ENCODE measurements at regions of chr14 and their contacts with region 1.

Region 1: DNA sequence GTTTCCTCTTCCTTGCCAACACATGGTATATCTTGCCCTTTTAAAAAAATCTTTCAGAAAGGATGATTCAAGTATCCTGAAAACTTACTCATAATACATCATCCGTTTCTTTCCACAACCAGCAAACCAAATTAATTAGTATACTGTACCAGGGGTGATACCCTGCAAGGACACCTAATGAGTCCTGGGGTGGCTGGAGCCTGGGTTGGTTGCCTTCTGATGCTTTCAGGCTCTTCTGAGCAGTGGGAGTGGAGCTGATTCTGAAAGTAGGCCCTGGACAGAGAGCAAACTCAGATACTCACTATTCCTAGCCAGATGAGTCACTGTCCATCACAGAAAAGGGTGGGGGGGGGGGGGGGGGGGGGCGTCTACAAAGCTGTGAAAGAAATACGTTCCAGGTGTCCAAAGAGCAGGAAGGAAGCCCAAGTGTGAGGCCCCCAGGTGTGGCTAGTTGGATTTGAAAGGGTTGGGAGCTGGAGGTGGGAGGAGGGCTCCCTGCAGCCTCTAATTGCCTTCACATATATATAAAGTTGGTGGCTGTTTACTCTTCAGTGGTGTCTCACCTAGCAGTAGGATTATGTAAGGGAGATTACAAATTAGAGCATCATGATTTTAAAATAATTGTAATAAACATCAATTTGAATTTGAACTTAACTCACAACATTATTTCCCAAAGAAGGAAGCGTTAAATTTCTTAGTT is 36.5 kb downstream of the FBXO33 start:
- DNase-seq: peak; percentile 26
- H3K4me3 Mint-ChIP-seq: no peak overlapping the region
- H3K27ac Mint-ChIP-seq: peak overlapping the region; percentile 81
- H3K4me1 Mint-ChIP-seq: peaks cover 19% of the 10 kb centered on the region
- H3K27me3 Mint-ChIP-seq: no peaks in the 10 kb centered on the region

Region 2: DNA sequence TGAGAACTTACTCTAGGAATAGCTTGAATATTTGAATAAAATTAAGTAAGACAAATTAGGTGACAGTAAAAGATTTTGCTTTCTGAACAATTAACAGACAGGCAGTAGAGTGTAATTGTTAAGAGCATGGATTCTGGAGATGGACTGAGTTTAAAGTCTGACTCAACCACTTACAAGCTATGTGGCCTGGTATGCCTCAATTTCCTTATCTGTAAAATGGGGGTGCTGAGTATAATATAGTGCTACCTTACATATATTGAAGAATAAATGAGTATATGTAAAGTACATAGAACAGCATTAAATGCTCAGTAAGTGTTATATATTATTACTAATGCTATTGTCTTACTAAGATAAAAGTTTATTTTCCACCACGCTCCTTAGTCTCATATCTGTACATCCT is 154.9 kb before region 1 on chr14:
- CTCF ChIA-PET with region 1: no interaction called
- intact Hi-C with region 1: no loop called
- DNase-seq: no peak
- H3K4me3 Mint-ChIP-seq: no peak overlapping the region
- H3K27ac Mint-ChIP-seq: no peak overlapping the region
- H3K4me1 Mint-ChIP-seq: no peaks in the 10 kb centered on the region
- H3K27me3 Mint-ChIP-seq: no peaks in the 10 kb centered on the region

Region 3: DNA sequence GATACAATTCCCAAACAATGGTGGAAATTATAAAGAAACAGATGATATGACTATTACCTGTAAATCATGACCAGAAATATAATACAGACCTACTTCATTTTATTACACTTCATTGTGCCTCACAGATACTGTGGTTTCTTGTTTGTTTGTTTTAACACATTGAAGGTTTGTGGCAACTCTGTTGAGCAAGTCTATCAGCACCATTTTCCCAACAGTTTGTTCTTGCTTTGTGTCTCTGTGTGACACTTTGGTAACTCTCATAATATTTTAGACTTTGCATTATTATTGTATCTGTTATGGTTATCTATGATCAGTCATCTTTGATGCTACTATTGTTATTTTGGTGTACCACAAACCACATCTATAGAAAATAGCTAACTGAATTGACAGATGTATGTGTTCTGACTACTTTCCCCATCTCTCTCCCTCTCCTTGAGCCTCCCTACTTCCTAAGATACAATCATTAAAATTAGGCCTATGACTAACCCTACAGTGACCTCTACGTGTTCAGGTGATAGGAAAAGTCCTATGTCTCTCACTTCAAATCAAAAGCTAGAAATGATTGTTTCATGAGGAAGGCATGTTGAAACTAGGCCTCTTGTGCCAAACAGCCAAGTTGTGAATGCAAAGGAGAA is 12.6 kb before region 1 on chr14:
- CTCF ChIA-PET with region 1: interaction called, 5 read pairs
- intact Hi-C with region 1: loop called (anchors 1 kb)
- DNase-seq: no peak
- H3K4me3 Mint-ChIP-seq: no peak overlapping the region
- H3K27ac Mint-ChIP-seq: no peak overlapping the region
- H3K4me1 Mint-ChIP-seq: peaks cover 22% of the 10 kb centered on the region
- H3K27me3 Mint-ChIP-seq: no peaks in the 10 kb centered on the region

Region 4: DNA sequence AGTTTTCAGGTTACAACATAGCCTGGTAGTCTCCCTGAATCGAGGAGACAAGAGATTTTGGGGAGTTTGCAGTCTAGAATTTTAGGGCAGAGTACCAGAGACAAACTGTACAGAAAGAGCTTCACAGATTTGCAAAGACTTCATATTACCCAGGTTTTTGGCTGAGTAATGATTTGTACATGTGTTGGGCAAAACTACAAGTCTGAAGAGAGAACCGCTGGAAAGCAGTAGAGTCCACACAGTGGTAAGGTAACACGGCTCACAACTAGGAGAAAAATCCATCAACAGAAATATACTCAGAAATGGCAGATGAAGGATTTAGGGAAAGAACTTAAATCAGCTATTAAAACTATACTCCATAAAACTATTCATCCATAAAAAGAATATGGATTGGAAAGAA is 10.9 kb after region 1 on chr14:
- CTCF ChIA-PET with region 1: no interaction called
- intact Hi-C with region 1: no loop called
- DNase-seq: no peak
- H3K4me3 Mint-ChIP-seq: no peak overlapping the region
- H3K27ac Mint-ChIP-seq: no peak overlapping the region
- H3K4me1 Mint-ChIP-seq: peaks cover 7% of the 10 kb centered on the region
- H3K27me3 Mint-ChIP-seq: no peaks in the 10 kb centered on the region